A549 (cell line): ENCODE measurements at regions of chr10 and their contacts with region 1.

Region 1: DNA sequence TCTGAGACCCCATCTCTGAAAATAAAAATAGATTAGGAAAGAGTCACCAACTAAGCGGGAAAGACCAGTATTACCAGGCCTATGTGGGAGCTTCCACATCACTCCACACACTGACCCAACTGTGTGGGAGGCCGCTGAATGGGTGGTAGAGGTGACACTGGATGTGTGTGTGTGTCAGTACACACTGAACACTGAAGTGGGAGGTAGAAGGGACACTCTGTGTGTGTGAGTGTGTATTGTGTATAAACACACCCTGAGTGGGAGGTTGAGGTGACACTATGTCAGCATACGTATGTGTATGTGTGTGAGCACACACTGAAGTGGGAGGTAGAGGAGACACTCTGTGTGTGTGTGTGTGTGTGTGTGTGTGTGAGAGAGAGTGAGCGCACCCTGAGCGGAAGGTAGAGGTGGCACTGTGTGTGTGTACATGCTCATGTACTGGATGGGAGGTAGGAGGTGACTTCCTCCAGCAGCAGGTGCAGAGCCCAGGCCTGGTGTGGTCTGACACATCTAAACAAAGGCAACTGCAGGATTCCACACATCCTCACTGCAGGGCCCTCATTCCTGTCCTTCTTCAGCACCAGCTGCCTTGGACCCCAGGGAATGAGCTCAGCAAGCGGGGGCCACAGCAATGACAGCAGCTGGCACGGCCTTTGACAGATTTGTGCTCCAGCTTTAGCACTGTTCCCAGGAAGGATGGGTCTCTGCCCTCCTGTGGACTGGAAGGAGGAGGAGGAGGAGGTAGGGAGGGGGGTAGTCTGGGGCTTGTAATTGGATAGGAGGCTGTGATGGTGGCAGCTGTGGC is 26.5 kb upstream of the RBM20 start:
- DNase-seq: no peak
- ATAC-seq: no peak
- H3K4me3 ChIP-seq: no peak overlapping the region
- H3K27ac ChIP-seq: no peak overlapping the region
- H3K4me1 ChIP-seq: 0 out of 3 replicates have a peak, but pooled peaks cover 3% of the 10 kb centered on the region
- CTCF ChIP-seq: no peak
- EP300 ChIP-seq: no peak
- POLR2A ChIP-seq: no peak
- RAD21 ChIP-seq: no peak

Region 2: DNA sequence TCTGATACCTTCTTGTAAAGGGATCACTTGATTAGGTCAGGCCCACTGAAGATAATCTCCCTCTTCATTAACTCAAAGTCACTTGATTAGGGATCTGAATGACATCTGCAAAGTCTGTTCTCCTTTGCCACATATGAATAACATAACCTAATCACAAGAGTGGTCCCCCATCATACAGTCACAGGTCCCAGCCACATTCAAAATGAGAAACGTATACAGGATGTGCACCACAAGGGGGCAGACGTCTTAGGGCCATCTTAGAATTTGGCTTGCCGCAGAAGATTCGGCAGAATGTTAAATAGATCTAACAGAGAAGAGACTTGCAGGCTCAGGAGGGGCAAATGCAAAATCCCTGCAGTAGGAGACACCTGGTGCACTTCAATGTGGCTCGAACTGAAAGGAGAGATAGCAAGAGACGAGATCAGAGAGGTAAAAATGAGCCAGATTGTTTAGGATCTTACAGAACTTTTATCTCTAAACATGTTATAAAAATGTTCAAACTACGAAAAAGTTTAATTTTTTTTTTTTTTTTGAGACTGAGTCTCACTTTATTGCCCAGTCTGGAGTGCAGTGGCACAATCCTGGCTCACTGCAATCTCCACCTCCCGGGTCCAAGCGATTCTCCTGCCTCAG is 60.5 kb before region 1 on chr10:
- CTCF ChIA-PET with region 1: no interaction called
- POLR2A ChIA-PET with region 1: no interaction called
- DNase-seq: peak; percentile 73 to 74
- ATAC-seq: peak; percentile 90 to 95
- H3K4me3 ChIP-seq: no peak overlapping the region
- H3K27ac ChIP-seq: 0 out of 6 replicates have a peak overlapping the region, but pooled peaks of 1 of the 2 experiments have one; percentile 7
- H3K4me1 ChIP-seq: no peaks in the 10 kb centered on the region
- CTCF ChIP-seq: peak; percentile 62
- EP300 ChIP-seq: no peak
- POLR2A ChIP-seq: no peak
- RAD21 ChIP-seq: peak; percentile 36 to 51; a peak in 4 of 5 replicates

Region 3: GRCh38 chr10:110681023-110681681 is 63.5 kb after region 1 on chr10:
- CTCF ChIA-PET with region 1: interaction called, 88 read pairs
- POLR2A ChIA-PET with region 1: no interaction called
- DNase-seq: peak; percentile 57 to 81
- ATAC-seq: peak; percentile 92 to 96
- H3K4me3 ChIP-seq: no peak overlapping the region
- H3K27ac ChIP-seq: no peak overlapping the region
- H3K4me1 ChIP-seq: peaks cover 7% of the 10 kb centered on the region; the same call in 2 of the 3 replicates
- CTCF ChIP-seq: peak; percentile 64
- EP300 ChIP-seq: no peak
- POLR2A ChIP-seq: no peak
- RAD21 ChIP-seq: peak; percentile 59 to 75; a peak in 4 of 5 replicates